Activated B cell treated with CpG ODN at 0.5 μM for 24 hours (primary cell): ENCODE measurements at regions of chr10 and their contacts with region 1.

Region 1: GRCh38 chr10:79938728-79939406 is 10.0 kb downstream of the SFTPD start:
- DNase-seq: peak; percentile 69
- ATAC-seq: peak; percentile 85
- H3K4me3 Mint-ChIP-seq: peak overlapping the region; percentile 64
- H3K27ac Mint-ChIP-seq: peak overlapping the region; percentile 97
- H3K4me1 Mint-ChIP-seq: peaks cover 48% of the 10 kb centered on the region
- H3K27me3 Mint-ChIP-seq: no peaks in the 10 kb centered on the region
- CTCF ChIP-seq: no peak

Region 2: GRCh38 chr10:79242620-79243152 is 696.2 kb before region 1 on chr10:
- CTCF ChIA-PET with region 1: no interaction called
- POLR2A ChIA-PET with region 1: no interaction called
- intact Hi-C with region 1: loop called (anchors 5 kb)
- DNase-seq: peak; percentile 71
- ATAC-seq: peak; percentile 52
- H3K4me3 Mint-ChIP-seq: peak overlapping the region; percentile 84
- H3K27ac Mint-ChIP-seq: peak overlapping the region; percentile 50
- H3K4me1 Mint-ChIP-seq: peaks cover 57% of the 10 kb centered on the region
- H3K27me3 Mint-ChIP-seq: no peaks in the 10 kb centered on the region
- CTCF ChIP-seq: no peak

Region 3: DNA sequence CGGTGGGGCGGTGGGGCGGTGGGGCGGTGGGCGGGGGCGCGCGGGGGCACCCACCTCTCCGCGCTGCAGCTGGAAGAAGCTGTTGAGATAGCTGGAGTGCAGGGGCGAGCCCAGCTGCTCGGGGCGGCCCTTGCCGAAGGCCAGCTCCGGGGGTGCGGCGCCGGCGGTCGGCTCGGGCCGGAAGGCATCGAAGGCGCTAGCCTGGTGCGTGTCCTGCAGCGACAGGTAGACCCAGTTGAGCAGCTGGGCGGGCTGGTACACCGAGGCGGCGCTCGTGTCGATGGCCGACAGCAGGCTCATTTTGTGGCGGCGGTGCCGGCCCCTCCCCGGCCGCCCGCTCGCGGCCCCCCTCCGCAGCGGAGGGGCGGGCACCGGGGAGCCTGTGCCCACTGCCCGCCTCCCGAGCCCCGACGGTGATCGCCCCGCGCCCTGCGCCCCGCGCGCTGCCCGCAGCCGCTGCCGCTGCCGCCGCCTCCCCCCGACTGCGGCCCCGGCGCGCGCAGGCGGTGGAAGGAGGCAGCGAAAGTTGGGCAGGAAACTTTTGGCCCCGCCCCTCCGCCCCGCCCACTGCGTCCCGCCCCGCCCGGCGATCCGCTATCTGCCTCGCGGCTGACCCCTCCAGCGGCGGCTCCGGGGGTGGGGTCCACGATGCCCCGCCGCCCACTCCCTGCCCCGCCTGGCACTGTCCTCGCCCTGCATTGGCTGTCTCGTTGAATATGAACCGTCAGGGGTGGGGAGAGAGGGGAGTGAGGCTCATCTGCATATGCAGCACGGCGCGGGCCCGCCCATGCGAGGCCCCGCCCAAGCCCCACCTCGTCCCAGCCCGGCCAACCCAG is 493.5 kb before region 1 on chr10 and contains the start of gene ZCCHC24:
- CTCF ChIA-PET with region 1: no interaction called
- POLR2A ChIA-PET with region 1: no interaction called
- intact Hi-C with region 1: loop called (anchors 5 kb)
- DNase-seq: peak; percentile 92
- ATAC-seq: peak; percentile 93
- H3K4me3 Mint-ChIP-seq: peak within 1 kb of the TSS; percentile 87
- H3K27ac Mint-ChIP-seq: peak within 1 kb of the TSS; percentile 50
- H3K4me1 Mint-ChIP-seq: peaks cover 26% of the 10 kb centered on the region
- H3K27me3 Mint-ChIP-seq: peaks cover 2% of the 10 kb centered on the region
- CTCF ChIP-seq: no peak
- total RNA-seq, gene ZCCHC24: 1.1 and 1.3 TPM in 2 replicates

Region 4: GRCh38 chr10:79602953-79603352 is 335.9 kb before region 1 on chr10:
- CTCF ChIA-PET with region 1: no interaction called
- POLR2A ChIA-PET with region 1: no interaction called
- intact Hi-C with region 1: no loop called
- DNase-seq: no peak
- ATAC-seq: no peak
- H3K4me3 Mint-ChIP-seq: no peak overlapping the region
- H3K27ac Mint-ChIP-seq: no peak overlapping the region
- H3K4me1 Mint-ChIP-seq: peaks cover 3% of the 10 kb centered on the region
- H3K27me3 Mint-ChIP-seq: no peaks in the 10 kb centered on the region
- CTCF ChIP-seq: no peak

Region 5: GRCh38 chr10:80078448-80079311 is 139.8 kb after region 1 on chr10 and contains the start of gene TMEM254:
- CTCF ChIA-PET with region 1: no interaction called
- POLR2A ChIA-PET with region 1: interaction called, 16 read pairs
- intact Hi-C with region 1: loop called (anchors 1 kb)
- DNase-seq: peak; percentile 85
- ATAC-seq: peak; percentile 86
- H3K4me3 Mint-ChIP-seq: peak within 1 kb of the TSS; percentile 97
- H3K27ac Mint-ChIP-seq: peak within 1 kb of the TSS; percentile 91
- H3K4me1 Mint-ChIP-seq: peaks cover 20% of the 10 kb centered on the region
- H3K27me3 Mint-ChIP-seq: no peaks in the 10 kb centered on the region
- CTCF ChIP-seq: no peak
- total RNA-seq, gene TMEM254: 14.7 and 16.2 TPM in 2 replicates

Region 6: GRCh38 chr10:80205478-80206276 is 266.8 kb after region 1 on chr10 and contains the start of gene ANXA11:
- CTCF ChIA-PET with region 1: no interaction called
- POLR2A ChIA-PET with region 1: no interaction called
- intact Hi-C with region 1: loop called (anchors 5 kb)
- DNase-seq: peak; percentile 80
- ATAC-seq: peak; percentile 84
- H3K4me3 Mint-ChIP-seq: peak within 1 kb of the TSS; percentile 83
- H3K27ac Mint-ChIP-seq: peak within 1 kb of the TSS; percentile 92
- H3K4me1 Mint-ChIP-seq: peaks cover 51% of the 10 kb centered on the region
- H3K27me3 Mint-ChIP-seq: no peaks in the 10 kb centered on the region
- CTCF ChIP-seq: no peak
- total RNA-seq, gene ANXA11: 178 and 190 TPM in 2 replicates

Region 7: DNA sequence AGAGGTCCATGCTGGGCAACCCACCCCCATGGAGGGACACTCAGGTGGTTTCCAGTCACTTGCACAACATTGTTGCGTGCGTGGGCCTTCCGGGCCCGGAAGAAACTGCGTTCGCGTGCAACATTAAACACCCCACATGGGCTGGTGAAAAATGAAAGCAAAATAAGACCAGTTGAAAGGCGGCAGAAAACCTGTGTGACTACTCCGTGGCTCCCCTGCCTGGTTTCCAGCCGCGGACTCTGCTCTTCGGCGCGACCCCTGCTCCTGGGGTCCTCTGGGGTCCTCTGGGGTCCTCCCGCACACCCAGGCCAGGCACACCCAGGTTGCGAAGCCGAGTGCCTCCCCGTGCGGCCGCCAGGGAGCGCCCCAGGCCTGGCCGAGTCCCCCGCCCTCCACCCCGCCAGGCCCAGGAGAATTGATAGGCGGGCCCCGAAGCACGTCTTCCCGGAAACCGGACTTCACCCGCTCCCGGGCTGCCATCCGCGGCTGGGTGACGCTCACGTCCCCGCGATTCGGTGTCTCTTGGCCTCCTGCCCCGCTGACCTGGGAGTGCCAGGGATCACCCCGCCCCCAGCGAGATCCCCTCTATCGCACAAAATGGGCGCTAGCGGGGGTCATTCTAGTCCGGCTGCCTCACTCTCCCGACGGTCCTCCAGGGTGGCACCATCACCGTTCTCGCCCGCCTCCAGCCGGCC is 597.0 kb after region 1 on chr10:
- CTCF ChIA-PET with region 1: no interaction called
- POLR2A ChIA-PET with region 1: no interaction called
- intact Hi-C with region 1: loop called (anchors 10 kb)
- DNase-seq: peak; percentile 76
- ATAC-seq: peak; percentile 89
- H3K4me3 Mint-ChIP-seq: peak overlapping the region; percentile 88
- H3K27ac Mint-ChIP-seq: peak overlapping the region; percentile 89
- H3K4me1 Mint-ChIP-seq: peaks cover 35% of the 10 kb centered on the region
- H3K27me3 Mint-ChIP-seq: no peaks in the 10 kb centered on the region
- CTCF ChIP-seq: peak; percentile 38